Activated CD8-positive, alpha-beta T cell treated with anti-CD3 and anti-CD28 coated beads for 36 hours (primary cell): ENCODE measurements at regions of chr10 and their contacts with region 1.

Region 1: GRCh38 chr10:8404391-8405120 is 350.1 kb downstream of the GATA3 start:
- DNase-seq: peak; percentile 62
- ATAC-seq: peak; percentile 40
- H3K4me3 Mint-ChIP-seq: peak overlapping the region; percentile 65
- H3K27ac Mint-ChIP-seq: peak overlapping the region; percentile 85
- H3K4me1 Mint-ChIP-seq: peaks cover 64% of the 10 kb centered on the region
- H3K27me3 Mint-ChIP-seq: no peaks in the 10 kb centered on the region
- CTCF ChIP-seq: no peak

Region 2: GRCh38 chr10:8053446-8054290 is 350.9 kb before region 1 on chr10:
- CTCF ChIA-PET with region 1: no interaction called
- POLR2A ChIA-PET with region 1: interaction called, 3 read pairs
- intact Hi-C with region 1: loop called (anchors 10 kb)
- DNase-seq: peak; percentile 96
- ATAC-seq: peak; percentile 68
- H3K4me3 Mint-ChIP-seq: peak overlapping the region; percentile 89
- H3K27ac Mint-ChIP-seq: peak overlapping the region; percentile 96
- H3K4me1 Mint-ChIP-seq: peaks cover 31% of the 10 kb centered on the region
- H3K27me3 Mint-ChIP-seq: peaks cover 16% of the 10 kb centered on the region
- CTCF ChIP-seq: no peak

Region 3: GRCh38 chr10:8245131-8245813 is 159.3 kb before region 1 on chr10:
- CTCF ChIA-PET with region 1: no interaction called
- POLR2A ChIA-PET with region 1: no interaction called
- intact Hi-C with region 1: loop called (anchors 10 kb)
- DNase-seq: peak; percentile 22
- ATAC-seq: no peak
- H3K4me3 Mint-ChIP-seq: peak overlapping the region; percentile 49
- H3K27ac Mint-ChIP-seq: peak overlapping the region; percentile 79
- H3K4me1 Mint-ChIP-seq: peaks cover 53% of the 10 kb centered on the region
- H3K27me3 Mint-ChIP-seq: no peaks in the 10 kb centered on the region
- CTCF ChIP-seq: no peak

Region 4: GRCh38 chr10:8306685-8307364 is 97.7 kb before region 1 on chr10:
- CTCF ChIA-PET with region 1: no interaction called
- POLR2A ChIA-PET with region 1: no interaction called
- intact Hi-C with region 1: no loop called
- DNase-seq: no peak
- ATAC-seq: no peak
- H3K4me3 Mint-ChIP-seq: no peak overlapping the region
- H3K27ac Mint-ChIP-seq: no peak overlapping the region
- H3K4me1 Mint-ChIP-seq: peaks cover 15% of the 10 kb centered on the region
- H3K27me3 Mint-ChIP-seq: peaks cover 1% of the 10 kb centered on the region
- CTCF ChIP-seq: no peak

Region 5: GRCh38 chr10:8321990-8322389 is 82.6 kb before region 1 on chr10:
- CTCF ChIA-PET with region 1: interaction called, 3 read pairs
- POLR2A ChIA-PET with region 1: no interaction called
- intact Hi-C with region 1: loop called (anchors 5 kb)
- DNase-seq: no peak
- ATAC-seq: no peak
- H3K4me3 Mint-ChIP-seq: no peak overlapping the region
- H3K27ac Mint-ChIP-seq: no peak overlapping the region
- H3K4me1 Mint-ChIP-seq: peaks cover 25% of the 10 kb centered on the region
- H3K27me3 Mint-ChIP-seq: peaks cover 1% of the 10 kb centered on the region
- CTCF ChIP-seq: no peak